Activated T-helper 2 cell treated with anti-CD3 and anti-CD28 coated beads, Interferon-gamma antibody, Interleukin-2, Interleukin-4, amounts not matched to agents 10 μg/mL and 5 μg/mL and 100 μg/mL, durations not matched to agents 14 hours and 24 hours and 36 hours (primary cell): ENCODE measurements at regions of chr5 and their contacts with region 1.

Region 1: DNA sequence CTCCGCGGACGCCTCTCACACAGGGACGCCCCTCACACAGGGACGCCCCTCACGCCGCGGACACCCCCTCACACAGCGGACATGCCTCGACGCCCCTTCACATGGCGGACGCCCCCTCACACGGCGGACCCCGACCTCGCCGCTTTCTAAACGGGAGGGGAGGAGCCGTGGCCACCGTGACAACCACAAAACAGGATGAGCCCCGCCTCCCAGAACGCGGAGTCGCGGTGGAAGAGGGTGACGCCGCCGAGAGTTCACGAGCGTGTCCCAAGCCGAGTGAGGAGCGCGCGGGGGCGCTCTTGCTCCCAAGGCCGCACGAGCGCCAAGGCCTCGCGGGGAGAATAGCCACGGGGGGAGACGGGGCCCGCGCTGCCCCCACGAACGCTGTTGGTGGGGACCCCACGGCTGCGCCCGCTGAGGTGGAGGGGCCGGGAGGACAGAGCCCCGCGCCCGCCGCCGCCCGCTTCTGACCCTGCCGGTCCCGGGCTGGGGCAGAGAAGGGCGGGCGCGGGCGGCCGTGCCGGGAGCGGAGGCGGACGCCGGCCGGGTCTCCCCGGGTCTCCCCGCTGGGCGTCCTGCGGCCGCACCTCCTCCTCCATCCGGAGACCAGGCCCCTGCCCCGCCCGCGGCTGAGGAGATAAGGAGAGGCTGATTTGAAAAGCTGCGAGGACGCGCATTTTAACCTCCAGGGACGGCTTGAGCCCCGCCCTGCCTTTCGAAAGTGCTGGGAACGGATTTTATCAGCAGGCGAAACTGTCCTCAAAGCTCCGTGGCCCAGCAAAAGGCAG is 3.9 kb upstream of the NKD2 start:
- DNase-seq: peak; percentile 51
- H3K4me3 Mint-ChIP-seq: peak overlapping the region; percentile 67
- H3K27ac Mint-ChIP-seq: no peak overlapping the region
- H3K4me1 Mint-ChIP-seq: peaks cover 27% of the 10 kb centered on the region
- H3K27me3 Mint-ChIP-seq: peaks cover 13% of the 10 kb centered on the region

Region 2: DNA sequence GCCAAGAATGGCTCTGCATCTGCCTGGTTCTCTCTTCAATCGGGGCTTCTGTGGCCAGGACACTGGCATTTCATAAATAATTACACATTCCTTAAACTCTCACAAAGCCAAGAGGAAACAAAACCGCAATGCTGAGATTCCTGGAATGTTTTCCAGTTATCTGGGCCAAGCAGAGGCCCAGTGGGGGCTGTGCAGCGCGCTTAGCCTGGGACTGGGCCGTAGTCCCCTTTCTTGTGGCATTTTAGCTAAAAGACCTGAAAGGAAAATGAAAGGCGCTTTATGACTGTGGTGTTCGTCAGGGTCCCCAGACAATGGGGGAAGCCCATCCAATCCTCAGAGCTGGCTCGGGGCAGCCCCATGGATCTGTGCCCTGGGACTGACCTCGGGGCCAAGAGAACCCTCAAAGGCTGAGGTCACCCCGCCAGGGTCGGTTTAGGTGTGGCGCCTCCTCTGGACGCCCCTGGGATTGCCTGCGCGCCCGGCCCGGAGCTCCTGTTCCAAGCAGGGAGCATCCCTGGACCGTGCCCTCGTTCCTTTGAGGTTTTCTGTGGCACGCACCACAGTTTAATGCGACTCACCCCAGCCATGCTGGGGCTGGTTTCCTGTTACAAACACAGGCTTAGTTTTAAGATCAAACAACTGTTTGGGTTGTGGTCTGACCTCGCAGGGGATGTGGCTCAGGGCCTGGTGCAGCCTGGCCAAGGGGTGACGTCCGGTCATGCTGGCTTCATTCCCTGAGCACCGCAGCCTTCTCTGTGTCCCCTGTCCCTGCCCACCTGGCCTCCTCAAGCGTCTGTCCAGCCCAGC is 47.5 kb before region 1 on chr5:
- intact Hi-C with region 1: loop called (anchors 2 kb)
- DNase-seq: peak; percentile 60
- H3K4me3 Mint-ChIP-seq: no peak overlapping the region
- H3K27ac Mint-ChIP-seq: peak overlapping the region; percentile 58
- H3K4me1 Mint-ChIP-seq: peaks cover 43% of the 10 kb centered on the region
- H3K27me3 Mint-ChIP-seq: peaks cover 4% of the 10 kb centered on the region

Region 3: GRCh38 chr5:1105350-1106265 is 101.0 kb after region 1 on chr5:
- intact Hi-C with region 1: loop called (anchors 5 kb)
- DNase-seq: peak; percentile 79
- H3K4me3 Mint-ChIP-seq: peak overlapping the region; percentile 78
- H3K27ac Mint-ChIP-seq: peak overlapping the region; percentile 90
- H3K4me1 Mint-ChIP-seq: peaks cover 59% of the 10 kb centered on the region
- H3K27me3 Mint-ChIP-seq: no peaks in the 10 kb centered on the region